Activated B cell treated with CpG ODN at 0.5 μM for 24 hours (primary cell): ENCODE measurements at regions of chr3 and their contacts with region 1.

Region 1: DNA sequence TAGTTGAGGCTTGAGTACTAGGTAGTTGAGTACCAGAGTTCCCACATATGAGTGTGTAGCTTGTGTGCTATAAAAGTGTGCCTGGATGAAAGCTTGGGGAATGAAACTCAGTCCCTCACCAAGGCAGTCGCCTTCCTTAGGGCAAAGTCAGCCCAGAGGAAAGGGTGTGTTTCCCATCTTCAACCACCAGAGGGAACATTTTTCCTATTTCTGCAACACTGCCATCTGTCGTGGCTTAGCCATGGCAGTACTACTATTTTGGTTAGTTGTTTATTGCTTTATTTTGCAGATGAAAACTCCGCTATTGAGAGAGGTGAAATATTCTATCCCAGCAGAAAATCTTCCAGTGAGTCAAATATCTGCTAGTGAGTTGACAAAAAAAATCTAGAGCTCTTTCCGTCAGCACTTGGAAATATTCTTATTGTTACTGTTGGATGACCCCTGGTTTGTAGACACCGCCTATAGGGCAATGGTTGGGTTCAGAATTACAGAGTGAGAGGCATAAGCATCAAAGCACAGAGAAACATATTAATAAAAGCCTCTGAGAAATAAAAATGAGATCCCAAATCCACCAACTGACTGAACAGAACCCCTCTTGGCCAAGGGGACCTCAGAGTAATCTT is 239.9 kb downstream of the CPNE4 start:
- DNase-seq: no peak
- ATAC-seq: peak; percentile 66
- H3K4me3 Mint-ChIP-seq: no peak overlapping the region
- H3K27ac Mint-ChIP-seq: no peak overlapping the region
- H3K4me1 Mint-ChIP-seq: peaks cover 15% of the 10 kb centered on the region
- H3K27me3 Mint-ChIP-seq: peaks cover 14% of the 10 kb centered on the region
- CTCF ChIP-seq: no peak

Region 2: GRCh38 chr3:131033480-131034080 is 761.3 kb before region 1 on chr3:
- CTCF ChIA-PET with region 1: interaction called, 3 read pairs
- POLR2A ChIA-PET with region 1: no interaction called
- intact Hi-C with region 1: loop called (anchors 1 kb)
- DNase-seq: no peak
- ATAC-seq: peak; percentile 60
- H3K4me3 Mint-ChIP-seq: no peak overlapping the region
- H3K27ac Mint-ChIP-seq: no peak overlapping the region
- H3K4me1 Mint-ChIP-seq: no peaks in the 10 kb centered on the region
- H3K27me3 Mint-ChIP-seq: no peaks in the 10 kb centered on the region
- CTCF ChIP-seq: peak; percentile 71

Region 3: DNA sequence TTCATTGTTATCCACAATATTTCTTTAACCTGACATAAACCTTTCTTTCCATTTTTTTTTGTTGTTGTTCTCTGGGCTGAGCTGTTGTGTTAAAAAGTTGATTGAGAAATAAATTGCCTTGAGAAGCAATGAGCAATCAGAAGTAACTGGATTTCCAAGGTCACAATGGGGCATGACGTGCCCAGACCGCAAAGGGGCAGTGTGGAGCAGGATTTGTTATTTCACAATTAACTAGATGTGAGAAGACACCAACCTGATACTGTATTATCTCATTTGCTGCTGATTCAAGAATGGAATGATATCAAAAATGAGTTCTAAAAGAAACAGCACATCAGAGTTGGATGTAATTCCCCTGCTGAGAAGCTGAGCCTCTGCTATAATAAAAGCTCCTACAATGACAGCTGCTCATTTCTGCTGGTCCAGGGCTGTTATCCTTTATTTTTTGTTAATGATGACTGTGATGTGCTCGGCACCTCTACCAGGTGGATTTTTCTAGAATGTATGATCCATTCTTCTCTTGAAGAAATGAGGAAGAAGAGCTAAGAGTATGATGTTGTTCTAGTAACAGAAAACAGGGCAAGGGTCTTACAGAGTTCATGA is 211.8 kb after region 1 on chr3:
- CTCF ChIA-PET with region 1: no interaction called
- POLR2A ChIA-PET with region 1: no interaction called
- intact Hi-C with region 1: no loop called
- DNase-seq: no peak
- ATAC-seq: no peak
- H3K4me3 Mint-ChIP-seq: no peak overlapping the region
- H3K27ac Mint-ChIP-seq: no peak overlapping the region
- H3K4me1 Mint-ChIP-seq: no peaks in the 10 kb centered on the region
- H3K27me3 Mint-ChIP-seq: no peaks in the 10 kb centered on the region
- CTCF ChIP-seq: no peak

Region 4: GRCh38 chr3:132180337-132180791 is 385.5 kb after region 1 on chr3:
- CTCF ChIA-PET with region 1: interaction called, 3 read pairs
- POLR2A ChIA-PET with region 1: no interaction called
- intact Hi-C with region 1: loop called (anchors 1 kb)
- DNase-seq: no peak
- ATAC-seq: peak; percentile 25
- H3K4me3 Mint-ChIP-seq: no peak overlapping the region
- H3K27ac Mint-ChIP-seq: no peak overlapping the region
- H3K4me1 Mint-ChIP-seq: no peaks in the 10 kb centered on the region
- H3K27me3 Mint-ChIP-seq: peaks cover 15% of the 10 kb centered on the region
- CTCF ChIP-seq: no peak